HEK293 (cell line): ENCODE measurements at regions of chr3 and their contacts with region 1.

Region 1: DNA sequence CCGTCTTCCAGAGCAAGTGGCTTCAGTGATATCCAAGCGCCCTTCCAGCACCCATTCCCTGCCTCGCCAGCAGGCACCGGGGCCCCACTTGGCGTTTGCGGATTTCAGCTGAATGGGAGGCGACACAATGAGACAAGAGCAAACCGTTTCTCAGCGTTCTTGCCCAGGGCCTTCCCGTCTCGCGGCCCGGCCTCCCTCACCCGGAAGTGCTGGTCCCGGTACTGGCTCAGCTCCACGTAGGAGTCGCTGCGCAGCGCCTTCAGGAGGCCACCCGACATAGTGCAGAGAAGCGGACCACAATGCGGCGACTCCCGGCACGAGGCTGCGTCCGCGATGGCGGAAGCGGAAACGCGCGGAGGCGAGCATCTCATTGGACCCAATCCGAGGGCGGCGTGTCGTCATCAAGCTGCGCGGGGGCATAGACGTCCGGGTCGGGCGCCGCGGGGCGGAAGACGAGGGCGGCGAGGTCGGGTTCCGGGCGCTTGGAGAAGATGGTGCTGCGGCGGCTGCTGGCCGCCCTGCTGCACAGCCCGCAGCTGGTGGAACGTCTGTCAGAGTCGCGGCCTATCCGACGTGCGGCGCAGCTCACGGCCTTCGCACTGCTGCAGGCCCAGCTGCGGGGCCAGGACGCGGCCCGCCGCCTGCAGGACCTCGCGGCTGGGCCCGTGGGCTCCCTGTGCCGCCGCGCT is at the start of gene NCBP2:
- H3K4me3 ChIP-seq: peak within 1 kb of the TSS; percentile 91
- H3K27ac ChIP-seq: peak within 1 kb of the TSS; percentile 67
- H3K4me1 ChIP-seq: no peaks in the 10 kb centered on the region
- CTCF ChIP-seq: peak; percentile 95

Region 2: GRCh38 chr3:196867507-196868296 is 74.7 kb before region 1 on chr3 and contains the start of gene SENP5:
- CTCF ChIA-PET with region 1: no interaction called
- POLR2A ChIA-PET with region 1: interaction called, 24 read pairs
- H3K4me3 ChIP-seq: peak within 1 kb of the TSS; percentile 99
- H3K27ac ChIP-seq: peak within 1 kb of the TSS; percentile 81
- H3K4me1 ChIP-seq: no peaks in the 10 kb centered on the region
- CTCF ChIP-seq: no peak

Region 3: DNA sequence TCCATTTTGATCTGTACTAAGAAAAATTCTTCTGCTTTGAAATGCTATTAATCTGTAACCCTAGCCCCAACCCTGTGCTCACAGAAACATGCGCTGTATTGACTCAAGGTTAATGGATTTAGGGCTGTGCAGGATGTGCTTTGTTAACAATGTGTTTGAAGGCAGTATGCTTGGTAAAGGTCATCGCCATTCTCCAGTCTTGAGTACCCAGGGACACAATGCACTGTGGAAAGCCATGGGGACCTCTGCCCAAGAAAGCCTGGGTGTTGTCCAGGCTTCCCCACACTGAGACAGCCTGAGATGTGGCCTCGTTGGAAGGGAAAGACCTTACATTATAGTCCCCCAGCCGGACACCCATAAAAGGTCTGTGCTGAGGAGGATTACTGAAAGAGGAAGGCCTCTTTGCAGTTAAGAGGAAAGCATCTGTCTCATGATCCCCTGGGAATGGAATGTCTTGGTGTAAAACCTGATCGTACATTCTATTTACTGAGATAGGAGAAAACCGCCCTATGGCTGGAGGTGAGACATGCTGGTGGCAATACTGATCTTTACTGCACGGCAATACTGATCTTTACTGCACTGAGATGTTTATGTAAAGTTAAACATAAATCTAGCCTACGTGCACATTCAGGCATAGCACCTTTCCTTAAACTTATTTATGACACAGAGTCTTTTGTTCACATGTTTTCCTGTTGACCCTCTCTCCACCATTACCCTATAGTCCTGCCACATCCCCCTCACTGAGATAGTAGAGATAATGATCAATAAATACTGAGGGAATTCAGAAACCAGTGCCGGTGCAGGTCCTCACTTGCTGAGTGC is 19.9 kb after region 1 on chr3:
- CTCF ChIA-PET with region 1: no interaction called
- POLR2A ChIA-PET with region 1: no interaction called
- H3K4me3 ChIP-seq: no peak overlapping the region
- H3K27ac ChIP-seq: no peak overlapping the region
- H3K4me1 ChIP-seq: no peaks in the 10 kb centered on the region
- CTCF ChIP-seq: no peak